ENCODE measurements at regions of chr1 and their contacts with region 1.

Region 1: DNA sequence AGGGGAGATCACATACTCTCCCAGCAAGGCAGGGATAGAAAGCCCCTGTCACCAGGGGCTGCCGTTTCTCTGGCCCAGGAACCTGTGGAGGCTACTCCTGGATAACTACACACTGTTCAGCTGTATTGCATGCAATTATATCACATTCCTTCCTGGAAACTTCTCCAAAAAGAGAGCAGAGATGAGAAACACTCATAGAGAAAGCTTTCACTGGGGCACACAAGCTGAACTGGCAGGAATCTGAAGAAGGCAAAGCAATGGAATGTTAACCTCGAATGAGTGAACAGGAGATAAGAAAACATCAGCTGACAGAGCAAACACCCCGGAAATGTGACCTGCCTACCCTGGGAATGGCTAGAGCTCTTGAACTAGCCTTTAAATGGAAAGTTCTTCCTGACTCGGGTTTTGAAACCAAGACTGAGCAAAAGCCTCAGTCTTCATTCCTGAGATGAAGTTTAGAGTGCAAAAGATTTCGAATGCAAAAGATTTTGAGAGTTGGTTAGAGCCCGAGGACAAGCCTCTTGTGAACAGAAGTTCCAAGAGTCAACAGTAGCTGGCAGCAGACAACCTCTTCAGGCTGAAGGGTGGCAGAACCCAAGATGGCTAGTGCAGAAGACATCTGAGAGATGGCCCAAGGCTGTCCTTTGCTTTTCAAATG is 32.3 kb downstream of the CCN1 start:
- DNase-seq: peak; percentile 85
- H3K4me3 ChIP-seq: no peak overlapping the region
- H3K27ac ChIP-seq: peak overlapping the region; percentile 99
- H3K27me3 ChIP-seq: no peaks in the 10 kb centered on the region
- CTCF ChIP-seq: peak; percentile 67

Region 2: DNA sequence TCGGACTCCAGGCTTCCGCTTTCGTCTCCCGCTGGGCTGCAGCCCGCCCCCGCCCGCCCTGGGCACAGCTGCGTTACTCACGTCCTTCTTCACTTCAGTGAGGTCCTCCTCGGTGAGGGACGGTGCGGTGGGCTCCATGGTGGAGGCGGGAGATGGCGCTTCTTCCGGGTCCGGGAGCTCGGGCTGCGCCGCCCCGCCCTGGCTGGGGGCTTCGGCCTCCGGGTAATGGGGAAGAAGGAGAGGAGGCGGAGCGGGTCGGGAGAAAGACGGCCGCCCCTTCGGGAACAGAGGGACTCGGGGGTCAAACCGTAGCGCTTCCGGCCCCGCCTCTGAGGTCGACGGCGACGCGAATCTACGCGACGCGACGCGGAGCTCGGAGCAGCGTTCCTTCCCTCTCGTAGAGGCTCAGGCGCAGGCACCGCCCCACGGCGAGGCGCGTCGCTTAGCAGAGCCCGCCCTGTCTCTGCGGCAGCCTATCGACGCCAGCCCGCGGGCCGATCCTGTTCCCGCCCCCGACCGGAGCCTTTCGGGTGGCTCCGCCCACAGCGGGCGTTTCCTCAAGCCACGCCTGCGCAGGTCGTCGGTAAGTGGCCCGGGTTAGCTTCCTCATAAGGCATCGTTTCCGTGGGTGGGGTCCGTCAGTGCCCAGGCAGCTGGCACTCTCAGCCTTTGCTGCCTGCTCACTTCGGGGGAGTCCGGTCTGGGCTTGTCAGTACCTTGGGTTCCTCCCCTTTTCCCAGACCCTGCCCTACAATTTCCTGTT is 336.4 kb before region 1 on chr1 and contains the start of gene BCL10:
- CTCF ChIA-PET with region 1: no interaction called
- POLR2A ChIA-PET with region 1: interaction called, 12 read pairs
- DNase-seq: peak; percentile 94
- H3K4me3 ChIP-seq: peak within 1 kb of the TSS; percentile 98
- H3K27ac ChIP-seq: peak within 1 kb of the TSS; percentile 92
- H3K27me3 ChIP-seq: no peaks in the 10 kb centered on the region
- CTCF ChIP-seq: no peak
- polyA plus RNA-seq, gene BCL10: 17.2 and 19.4 TPM in 2 replicates

Region 3: GRCh38 chr1:85580872-85581801 is 31.7 kb before region 1 on chr1:
- CTCF ChIA-PET with region 1: interaction called, 3 read pairs
- POLR2A ChIA-PET with region 1: interaction called, 88 read pairs
- DNase-seq: peak; percentile 52
- H3K4me3 ChIP-seq: peak overlapping the region; percentile 93
- H3K27ac ChIP-seq: peak overlapping the region; percentile 99
- H3K27me3 ChIP-seq: no peaks in the 10 kb centered on the region
- CTCF ChIP-seq: peak; percentile 60

Region 4: DNA sequence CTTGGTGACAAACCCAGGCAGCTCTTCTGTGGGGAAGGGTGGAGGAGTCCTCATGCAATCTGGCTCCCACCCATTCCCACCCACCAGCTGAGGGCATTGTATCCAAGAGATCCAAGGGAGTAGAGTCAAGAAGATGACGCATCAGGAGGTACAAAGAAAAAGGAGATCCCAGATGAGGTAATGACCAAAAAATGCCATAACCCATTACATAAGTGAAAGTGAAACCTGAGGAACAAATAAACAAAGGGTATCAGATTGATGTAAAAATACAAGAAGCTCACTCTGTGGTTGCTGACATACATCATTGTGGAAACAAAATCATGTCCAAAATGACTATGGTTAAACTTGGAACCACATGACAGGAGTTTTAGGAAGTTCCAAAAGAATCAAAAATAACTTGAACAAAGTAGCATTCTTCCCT is 10.2 kb after region 1 on chr1:
- CTCF ChIA-PET with region 1: interaction called, 4 read pairs
- POLR2A ChIA-PET with region 1: interaction called, 88 read pairs
- DNase-seq: peak; percentile 79
- H3K4me3 ChIP-seq: no peak overlapping the region
- H3K27ac ChIP-seq: peak overlapping the region; percentile 84
- H3K27me3 ChIP-seq: no peaks in the 10 kb centered on the region
- CTCF ChIP-seq: no peak

Region 5: GRCh38 chr1:85628791-85629531 is 16.1 kb after region 1 on chr1:
- CTCF ChIA-PET with region 1: interaction called, 4 read pairs
- POLR2A ChIA-PET with region 1: interaction called, 88 read pairs
- DNase-seq: peak; percentile 92
- H3K4me3 ChIP-seq: peak overlapping the region; percentile 40
- H3K27ac ChIP-seq: peak overlapping the region; percentile 94
- H3K27me3 ChIP-seq: no peaks in the 10 kb centered on the region
- CTCF ChIP-seq: no peak